Activated CD8-positive, alpha-beta T cell treated with anti-CD3 and anti-CD28 coated beads, Interleukin-2, amount 10 ng/mL, durations not matched to agents 7 days and 5 days (primary cell): ENCODE measurements at regions of chr9 and their contacts with region 1.

Region 1: GRCh38 chr9:19137282-19137681 is 10.0 kb upstream of the PLIN2 start:
- DNase-seq: no peak
- ATAC-seq: no peak
- H3K4me3 Mint-ChIP-seq: no peak overlapping the region
- H3K27ac Mint-ChIP-seq: no peak overlapping the region
- H3K4me1 Mint-ChIP-seq: peaks cover 10% of the 10 kb centered on the region
- H3K27me3 Mint-ChIP-seq: no peaks in the 10 kb centered on the region

Region 2: DNA sequence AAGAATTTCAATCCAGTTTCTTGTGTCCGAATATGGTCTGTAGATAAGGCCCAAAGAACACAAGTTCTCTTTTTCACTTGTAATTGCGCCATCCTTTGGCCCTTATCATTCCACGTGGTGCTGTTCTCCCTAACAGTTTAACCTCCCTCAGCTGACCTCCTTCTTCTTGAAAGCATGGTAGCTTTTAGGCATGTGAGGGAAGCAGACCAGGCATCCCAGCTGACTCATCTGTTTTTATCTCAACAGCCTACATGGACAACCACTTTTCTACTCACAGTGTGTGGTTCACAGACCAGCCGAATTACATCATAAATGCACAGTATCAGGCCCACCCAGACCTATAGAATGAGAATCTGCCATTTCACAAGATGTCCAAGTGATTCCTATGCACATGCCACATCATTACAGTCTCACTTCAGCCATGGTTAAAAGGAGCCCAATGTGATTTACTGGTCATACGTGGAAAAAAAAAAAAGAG is 16.9 kb after region 1 on chr9:
- CTCF ChIA-PET with region 1: interaction called, 18 read pairs
- POLR2A ChIA-PET with region 1: no interaction called
- DNase-seq: no peak
- ATAC-seq: no peak
- H3K4me3 Mint-ChIP-seq: no peak overlapping the region
- H3K27ac Mint-ChIP-seq: no peak overlapping the region
- H3K4me1 Mint-ChIP-seq: peaks cover 14% of the 10 kb centered on the region
- H3K27me3 Mint-ChIP-seq: no peaks in the 10 kb centered on the region

Region 3: DNA sequence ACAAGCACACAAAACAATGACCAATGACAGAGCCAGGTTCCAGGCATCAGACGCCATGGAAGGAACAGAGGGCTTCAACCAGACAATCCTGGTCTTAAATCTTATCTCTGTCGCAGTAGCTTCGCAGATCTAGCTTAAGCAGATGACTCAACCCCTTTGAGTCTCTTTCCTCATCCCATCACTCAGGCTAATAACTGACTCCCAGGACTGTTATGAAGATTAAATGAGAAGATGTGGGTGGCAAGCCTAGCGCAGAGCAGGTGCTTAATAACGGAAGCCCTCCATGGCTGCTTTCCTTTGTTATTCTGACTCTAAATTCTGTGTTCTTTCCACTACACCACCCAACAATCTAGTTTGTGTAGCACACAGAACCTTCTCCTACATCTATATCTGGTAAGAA is 540.6 kb after region 1 on chr9:
- CTCF ChIA-PET with region 1: no interaction called
- POLR2A ChIA-PET with region 1: no interaction called
- DNase-seq: no peak
- ATAC-seq: no peak
- H3K4me3 Mint-ChIP-seq: no peak overlapping the region
- H3K27ac Mint-ChIP-seq: no peak overlapping the region
- H3K4me1 Mint-ChIP-seq: no peaks in the 10 kb centered on the region
- H3K27me3 Mint-ChIP-seq: peaks cover 4% of the 10 kb centered on the region